ENCODE measurements at regions of chr2 and their contacts with region 1.

Region 1: DNA sequence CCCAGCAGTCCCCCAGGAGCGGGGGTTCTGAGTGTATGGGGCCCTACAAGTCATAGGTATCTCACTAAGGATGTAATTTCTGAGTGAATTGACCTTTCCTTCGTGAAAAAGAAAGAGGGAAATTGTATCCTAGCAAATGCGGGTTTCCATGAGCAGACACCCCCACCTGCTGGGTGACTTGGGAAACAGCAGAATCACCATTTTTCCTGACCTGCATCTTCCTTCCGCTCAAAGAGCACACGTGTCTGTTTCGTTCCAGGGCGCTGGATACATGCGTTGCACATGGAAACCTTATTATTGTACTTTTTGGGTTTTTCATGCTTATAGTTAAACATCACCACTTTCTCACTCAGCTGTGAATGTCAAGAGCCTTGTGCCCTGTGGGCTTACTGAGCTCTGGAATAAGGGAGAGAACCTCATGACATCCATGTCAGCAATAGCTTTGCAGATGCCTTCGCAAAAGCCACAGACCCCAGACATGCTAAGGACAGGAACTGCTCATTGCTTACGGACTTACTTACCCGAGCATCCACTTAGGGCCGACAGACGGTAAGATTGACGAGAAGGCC is 132.8 kb downstream of the TPO start:
- DNase-seq: no peak
- H3K4me3 ChIP-seq: no peak overlapping the region
- H3K27ac ChIP-seq: peak overlapping the region in 7 of 8 donors; percentile 38 to 66 (median 61)
- H3K4me1 ChIP-seq: peaks cover 5 to 36% (median 22%) of the 10 kb centered on the region in 6 donors
- H3K27me3 ChIP-seq: peaks cover 0 to 28% (median 0%) of the 10 kb centered on the region in 7 donors
- CTCF ChIP-seq: peak; percentile 50 to 82 (median 68)
- POLR2A ChIP-seq: no peak

Region 2: DNA sequence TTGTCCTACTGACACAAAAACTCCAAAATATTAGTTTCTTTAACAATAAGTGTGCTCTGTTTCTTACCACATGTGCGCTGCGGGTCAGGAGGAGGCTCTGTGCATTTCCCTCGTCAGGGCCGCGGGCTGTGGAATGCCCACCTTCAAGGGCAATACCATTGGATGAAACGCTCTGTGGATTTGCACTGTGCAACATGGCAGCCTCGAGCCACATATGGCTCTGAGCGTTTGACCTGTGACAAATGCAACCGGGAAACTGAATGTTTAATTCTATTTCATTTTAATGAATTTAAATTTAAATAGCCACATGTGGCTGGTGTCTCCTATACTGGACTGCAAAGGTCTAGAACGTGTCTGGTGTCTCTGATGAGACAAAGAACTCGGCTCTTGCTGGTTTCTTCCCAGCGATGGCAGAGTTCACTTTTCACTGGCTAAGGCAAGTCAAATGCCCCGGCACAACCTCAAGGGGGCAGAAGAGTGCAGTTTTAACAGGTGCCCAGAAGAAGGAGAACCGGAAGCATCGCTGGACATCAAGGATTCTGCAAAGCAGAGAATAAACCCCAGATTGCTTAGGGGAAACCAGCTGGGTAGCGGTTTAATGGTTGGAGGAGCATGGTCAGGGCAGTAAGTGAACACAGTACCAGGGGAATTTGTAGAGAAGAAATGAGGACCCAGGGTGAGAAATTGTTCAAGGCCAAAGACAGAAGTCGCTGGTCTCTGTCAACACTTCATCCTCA is 831.9 kb before region 1 on chr2:
- intact Hi-C with region 1: loop called (anchors 10 kb)
- DNase-seq: no peak
- H3K4me3 ChIP-seq: no peak overlapping the region
- H3K27ac ChIP-seq: no peak overlapping the region
- H3K4me1 ChIP-seq: peaks cover 0 to 14% (median 7%) of the 10 kb centered on the region in 6 donors
- H3K27me3 ChIP-seq: peaks cover 0 to 31% (median 2%) of the 10 kb centered on the region in 7 donors
- CTCF ChIP-seq: peak in 10 of 11 experiments; percentile 56 to 82 (median 72)
- POLR2A ChIP-seq: no peak

Region 3: GRCh38 chr2:854460-854859 is 691.6 kb before region 1 on chr2:
- intact Hi-C with region 1: loop called (anchors 5 kb)
- DNase-seq: no peak
- H3K4me3 ChIP-seq: no peak overlapping the region
- H3K27ac ChIP-seq: no peak overlapping the region
- H3K4me1 ChIP-seq: peaks cover 0 to 17% (median 0%) of the 10 kb centered on the region in 6 donors
- H3K27me3 ChIP-seq: peaks cover 0 to 5% (median 0%) of the 10 kb centered on the region in 7 donors
- CTCF ChIP-seq: peak in 9 of 11 experiments; percentile 32 to 64 (median 54)
- POLR2A ChIP-seq: no peak

Region 4: GRCh38 chr2:1816414-1816911 is 270.4 kb after region 1 on chr2:
- intact Hi-C with region 1: no loop called
- DNase-seq: no peak
- H3K4me3 ChIP-seq: no peak overlapping the region
- H3K27ac ChIP-seq: peak overlapping the region in 1 of 8 donors; percentile 23
- H3K4me1 ChIP-seq: peaks cover 0 to 16% (median 6%) of the 10 kb centered on the region in 6 donors
- H3K27me3 ChIP-seq: peaks cover 0 to 19% (median 5%) of the 10 kb centered on the region in 7 donors
- CTCF ChIP-seq: no peak
- POLR2A ChIP-seq: no peak

Measured in spleen (tissue), 13 donors.